Activated B cell treated with CpG ODN at 0.5 μM for 24 hours (primary cell): ENCODE measurements at regions of chr18 and their contacts with region 1.

Region 1: DNA sequence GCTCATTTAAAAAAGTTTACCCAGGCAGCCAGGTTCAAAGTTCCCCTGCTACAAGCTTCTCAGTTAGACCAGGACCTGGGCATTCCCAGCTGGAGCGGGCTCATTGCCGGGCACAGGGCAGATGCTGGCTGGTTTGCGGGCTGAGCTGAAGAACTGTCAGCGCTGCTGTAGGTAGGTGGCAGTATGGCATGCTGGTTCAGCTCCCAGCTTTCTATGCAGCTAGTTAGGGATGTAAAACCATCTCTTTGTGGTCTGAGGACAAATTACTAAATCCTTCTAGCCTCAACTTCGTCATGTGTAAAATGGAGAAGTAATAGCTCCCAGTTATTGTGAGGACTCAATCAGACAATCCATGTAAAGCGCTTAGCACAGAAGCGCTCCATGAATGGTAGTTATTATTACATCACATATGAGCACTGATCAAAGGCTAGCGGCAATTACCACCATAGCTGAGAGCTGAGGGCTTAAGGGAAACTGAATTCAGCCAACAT is 2.4 kb upstream of the LDLRAD4 start:
- DNase-seq: no peak
- ATAC-seq: peak; percentile 48
- H3K4me3 Mint-ChIP-seq: peak overlapping the region; percentile 79
- H3K27ac Mint-ChIP-seq: no peak overlapping the region
- H3K4me1 Mint-ChIP-seq: peaks cover 16% of the 10 kb centered on the region
- H3K27me3 Mint-ChIP-seq: peaks cover 49% of the 10 kb centered on the region
- CTCF ChIP-seq: no peak

Region 2: DNA sequence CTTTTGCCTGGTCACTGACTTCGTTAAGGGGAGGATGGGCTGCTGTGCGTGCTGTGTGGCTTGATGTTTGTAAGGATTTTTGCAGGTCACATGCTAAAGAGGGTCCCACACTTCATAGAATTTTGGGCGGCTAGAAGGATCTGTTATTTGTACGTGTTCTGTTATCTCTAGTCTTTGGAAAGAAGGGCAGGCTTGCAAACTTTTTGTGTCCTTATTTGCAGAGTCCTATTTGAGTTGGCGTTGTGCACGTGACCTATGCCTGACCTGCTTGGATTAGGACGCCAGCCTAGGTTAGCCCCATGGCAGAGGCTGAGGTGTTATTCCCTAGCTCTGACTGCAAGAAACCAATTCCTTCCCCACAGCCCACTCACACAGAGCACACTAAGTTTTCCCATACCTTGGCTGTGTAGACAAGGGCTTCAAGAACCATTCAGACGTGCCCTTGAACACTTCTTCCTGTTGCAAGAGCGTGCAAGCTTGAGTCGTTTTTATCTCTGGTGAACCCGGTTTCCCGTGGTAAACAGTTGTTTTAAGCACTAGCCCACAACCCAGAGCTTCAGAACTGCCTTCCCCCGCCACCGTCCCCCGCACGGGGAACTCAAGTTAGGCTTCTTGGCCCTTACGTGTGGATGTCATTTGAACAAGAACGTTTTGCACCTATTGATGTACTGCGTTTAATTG is 97.0 kb after region 1 on chr18:
- CTCF ChIA-PET with region 1: no interaction called
- POLR2A ChIA-PET with region 1: no interaction called
- intact Hi-C with region 1: no loop called
- DNase-seq: no peak
- ATAC-seq: no peak
- H3K4me3 Mint-ChIP-seq: no peak overlapping the region
- H3K27ac Mint-ChIP-seq: no peak overlapping the region
- H3K4me1 Mint-ChIP-seq: no peaks in the 10 kb centered on the region
- H3K27me3 Mint-ChIP-seq: peaks cover 10% of the 10 kb centered on the region
- CTCF ChIP-seq: no peak

Region 3: GRCh38 chr18:13381944-13382365 is 165.8 kb after region 1 on chr18:
- CTCF ChIA-PET with region 1: no interaction called
- POLR2A ChIA-PET with region 1: no interaction called
- intact Hi-C with region 1: loop called (anchors 5 kb)
- DNase-seq: no peak
- ATAC-seq: peak; percentile 79
- H3K4me3 Mint-ChIP-seq: peak overlapping the region; percentile 82
- H3K27ac Mint-ChIP-seq: peak overlapping the region; percentile 87
- H3K4me1 Mint-ChIP-seq: peaks cover 25% of the 10 kb centered on the region
- H3K27me3 Mint-ChIP-seq: no peaks in the 10 kb centered on the region
- CTCF ChIP-seq: no peak

Region 4: GRCh38 chr18:13464432-13465123 is 248.4 kb after region 1 on chr18:
- CTCF ChIA-PET with region 1: interaction called, 3 read pairs
- POLR2A ChIA-PET with region 1: no interaction called
- intact Hi-C with region 1: loop called (anchors 5 kb)
- DNase-seq: peak; percentile 54
- ATAC-seq: peak; percentile 91
- H3K4me3 Mint-ChIP-seq: peak overlapping the region; percentile 91
- H3K27ac Mint-ChIP-seq: peak overlapping the region; percentile 91
- H3K4me1 Mint-ChIP-seq: peaks cover 30% of the 10 kb centered on the region
- H3K27me3 Mint-ChIP-seq: no peaks in the 10 kb centered on the region
- CTCF ChIP-seq: no peak

Region 5: DNA sequence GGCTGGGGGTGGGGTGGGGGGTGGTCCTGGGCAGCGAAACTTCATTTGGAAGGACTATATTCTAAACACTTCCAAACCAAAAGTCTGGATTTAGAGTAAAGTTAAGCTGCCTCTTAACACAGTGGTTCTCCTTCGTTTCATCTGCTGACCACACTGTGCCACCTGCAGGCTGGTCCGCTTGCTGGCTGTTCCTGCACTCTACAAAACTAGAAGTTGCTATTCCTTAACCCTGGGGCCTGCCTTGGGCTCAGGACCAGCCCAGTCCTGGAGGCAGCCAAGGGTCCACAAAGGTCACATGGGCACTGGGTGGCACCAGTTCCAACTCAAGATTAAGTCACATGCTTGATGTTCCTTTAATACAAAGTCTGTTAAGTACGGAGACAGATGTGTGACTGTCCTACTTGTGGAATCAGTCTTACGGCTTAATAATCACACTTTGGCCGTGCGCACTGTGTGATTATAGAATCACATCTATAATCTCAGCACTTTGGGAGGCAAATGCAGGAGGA is 314.8 kb after region 1 on chr18:
- CTCF ChIA-PET with region 1: interaction called, 9 read pairs
- POLR2A ChIA-PET with region 1: no interaction called
- intact Hi-C with region 1: loop called (anchors 1 kb)
- DNase-seq: no peak
- ATAC-seq: peak; percentile 25
- H3K4me3 Mint-ChIP-seq: no peak overlapping the region
- H3K27ac Mint-ChIP-seq: no peak overlapping the region
- H3K4me1 Mint-ChIP-seq: peaks cover 9% of the 10 kb centered on the region
- H3K27me3 Mint-ChIP-seq: no peaks in the 10 kb centered on the region
- CTCF ChIP-seq: no peak

Region 6: DNA sequence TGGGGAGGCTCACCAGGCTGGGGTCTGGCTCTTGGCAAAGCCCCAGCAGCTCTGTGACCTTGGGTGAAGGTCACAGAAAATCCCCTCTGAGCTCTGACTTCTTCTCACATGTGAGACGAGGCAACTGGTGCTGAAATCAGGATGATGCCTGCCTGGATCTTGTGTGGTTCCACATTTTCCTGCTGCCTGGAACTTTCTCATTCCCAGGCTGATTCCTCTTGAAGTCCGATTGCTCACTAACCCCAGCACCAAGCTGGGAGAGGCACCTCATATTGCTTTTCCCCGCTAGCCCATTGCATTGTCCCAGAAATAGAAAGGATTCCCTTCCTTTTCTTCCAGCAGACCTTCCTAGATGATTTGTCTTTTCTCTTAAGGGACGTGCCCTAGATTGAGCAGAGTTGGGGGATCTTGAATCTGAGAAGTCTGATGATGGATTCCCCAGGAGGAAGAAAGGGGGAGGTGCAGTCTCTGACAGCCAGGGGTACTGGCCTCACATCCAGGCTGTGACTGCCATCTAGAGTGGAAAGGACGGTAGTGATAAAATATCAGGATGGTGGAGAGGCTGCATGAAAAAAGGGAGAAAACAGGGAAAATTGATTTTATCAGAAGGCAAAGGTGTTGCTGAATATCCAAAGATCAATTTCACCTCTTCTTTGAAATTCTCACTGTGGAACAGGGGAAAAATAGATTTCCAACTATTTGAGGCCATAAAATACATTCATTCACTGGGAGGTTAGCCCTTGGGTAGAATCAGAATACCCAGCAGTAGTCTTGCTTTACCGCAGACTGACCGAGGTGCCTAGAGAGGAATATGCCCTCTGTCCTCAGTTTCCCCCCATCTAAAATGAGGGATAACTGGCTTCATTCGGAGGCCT is 413.9 kb after region 1 on chr18:
- CTCF ChIA-PET with region 1: interaction called, 7 read pairs
- POLR2A ChIA-PET with region 1: no interaction called
- intact Hi-C with region 1: loop called (anchors 1 kb)
- DNase-seq: no peak
- ATAC-seq: peak; percentile 95
- H3K4me3 Mint-ChIP-seq: peak overlapping the region; percentile 17
- H3K27ac Mint-ChIP-seq: peak overlapping the region; percentile 63
- H3K4me1 Mint-ChIP-seq: peaks cover 24% of the 10 kb centered on the region
- H3K27me3 Mint-ChIP-seq: no peaks in the 10 kb centered on the region
- CTCF ChIP-seq: peak; percentile 68

Region 7: DNA sequence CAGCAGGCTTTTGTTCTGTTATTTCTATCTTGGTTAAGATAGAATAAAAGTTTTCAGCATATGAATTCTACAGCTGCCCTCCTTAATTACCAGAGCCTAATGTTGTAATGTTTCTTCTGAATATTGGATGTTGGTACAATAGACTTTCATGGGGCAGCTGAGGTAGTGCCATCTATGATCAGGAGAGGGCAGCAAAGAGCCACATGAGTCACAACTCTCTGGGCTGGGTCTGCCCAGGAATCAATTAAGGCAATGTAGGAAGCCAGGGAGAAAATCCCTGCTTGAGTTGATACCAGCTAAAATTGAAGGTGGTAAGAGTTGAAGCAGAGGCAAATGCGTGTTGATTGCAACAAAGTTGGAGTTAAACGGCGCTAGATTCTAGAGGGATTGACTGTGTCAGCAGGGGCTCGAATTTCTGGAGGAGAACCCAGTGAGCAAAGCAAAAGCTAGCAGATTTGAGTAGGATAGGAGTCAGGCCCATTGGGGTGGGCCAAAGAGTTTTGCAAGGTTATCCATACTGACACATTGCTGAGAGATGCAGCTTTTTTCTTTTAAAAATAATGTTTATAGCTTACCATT is 597.2 kb after region 1 on chr18:
- CTCF ChIA-PET with region 1: interaction called, 4 read pairs
- POLR2A ChIA-PET with region 1: no interaction called
- intact Hi-C with region 1: loop called (anchors 2 kb)
- DNase-seq: no peak
- ATAC-seq: peak; percentile 81
- H3K4me3 Mint-ChIP-seq: no peak overlapping the region
- H3K27ac Mint-ChIP-seq: no peak overlapping the region
- H3K4me1 Mint-ChIP-seq: no peaks in the 10 kb centered on the region
- H3K27me3 Mint-ChIP-seq: peaks cover 2% of the 10 kb centered on the region
- CTCF ChIP-seq: peak; percentile 77